Right lobe of liver (tissue), 6 donors: ENCODE measurements at regions of chr17 and their contacts with region 1.

Region 1: GRCh38 chr17:81142301-81143199 is 22.8 kb upstream of the PVALEF start:
- DNase-seq: peak; percentile 80 to 83 (median 81)
- ATAC-seq: peak; percentile 90 to 97 (median 96)
- H3K4me3 ChIP-seq: no peak overlapping the region
- H3K27ac ChIP-seq: no peak overlapping the region
- H3K4me1 ChIP-seq: peaks cover 0 to 7% (median 0%) of the 10 kb centered on the region in 4 donors
- H3K27me3 ChIP-seq: no peaks in the 10 kb centered on the region
- CTCF ChIP-seq: peak; percentile 64 to 70 (median 66)
- POLR2A ChIP-seq: no peak

Region 2: GRCh38 chr17:80913928-80914821 is 228.4 kb before region 1 on chr17:
- intact Hi-C with region 1: no loop called
- DNase-seq: peak in 2 of 3 donors; percentile 48 to 76
- ATAC-seq: peak in 3 of 4 donors; percentile 30 to 58 (median 47)
- H3K4me3 ChIP-seq: no peak overlapping the region
- H3K27ac ChIP-seq: no peak overlapping the region
- H3K4me1 ChIP-seq: no peaks in the 10 kb centered on the region
- H3K27me3 ChIP-seq: no peaks in the 10 kb centered on the region
- CTCF ChIP-seq: no peak
- POLR2A ChIP-seq: no peak

Region 3: DNA sequence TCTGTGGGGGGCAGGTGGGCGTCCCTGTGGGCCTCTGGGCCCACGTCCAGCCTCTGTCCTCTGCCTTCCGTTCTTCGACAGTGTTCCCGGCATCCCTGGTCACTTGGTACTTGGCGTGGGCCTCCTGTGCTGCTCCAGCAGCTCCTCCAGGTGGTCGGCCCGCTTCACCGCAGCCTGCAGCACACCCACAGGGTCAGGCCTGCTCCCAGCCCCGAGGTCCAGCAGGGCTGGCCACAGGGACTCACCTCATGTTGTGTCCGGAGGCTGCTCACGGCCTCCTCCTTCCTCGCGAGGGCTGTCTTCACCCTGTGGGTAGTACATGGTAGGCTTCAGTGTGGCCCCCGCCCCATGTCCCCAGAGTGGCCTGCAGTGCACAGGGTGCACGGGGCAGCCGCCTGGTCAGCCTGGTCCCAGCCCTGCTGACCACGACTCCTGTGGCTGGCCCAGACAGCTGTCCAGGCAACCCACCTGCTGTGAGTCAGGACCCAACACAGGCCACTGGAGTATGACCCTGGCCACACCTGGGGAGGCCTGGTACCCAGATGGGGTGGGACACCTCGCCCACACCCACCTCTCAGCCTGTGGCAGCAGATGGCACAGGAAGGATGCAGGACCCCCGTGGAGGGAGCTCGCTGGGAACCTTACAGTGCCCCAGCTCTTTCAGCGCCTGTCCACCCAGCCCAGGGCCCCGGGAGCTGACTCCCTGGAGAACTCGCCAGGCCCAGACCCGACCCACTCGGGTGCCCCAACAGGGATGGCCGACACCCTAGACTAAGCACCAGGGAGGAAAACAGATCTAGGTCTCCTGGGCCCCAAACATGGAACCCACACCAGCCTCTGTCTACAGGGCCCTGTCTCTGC is 47.4 kb after region 1 on chr17:
- intact Hi-C with region 1: loop called in 1 of 2 experiments (anchors 10 kb)
- DNase-seq: no peak
- ATAC-seq: peak; percentile 30 to 52 (median 42)
- H3K4me3 ChIP-seq: no peak overlapping the region
- H3K27ac ChIP-seq: no peak overlapping the region
- H3K4me1 ChIP-seq: no peaks in the 10 kb centered on the region
- H3K27me3 ChIP-seq: no peaks in the 10 kb centered on the region
- CTCF ChIP-seq: peak in 1 of 4 donors; percentile 22
- POLR2A ChIP-seq: no peak

Region 4: DNA sequence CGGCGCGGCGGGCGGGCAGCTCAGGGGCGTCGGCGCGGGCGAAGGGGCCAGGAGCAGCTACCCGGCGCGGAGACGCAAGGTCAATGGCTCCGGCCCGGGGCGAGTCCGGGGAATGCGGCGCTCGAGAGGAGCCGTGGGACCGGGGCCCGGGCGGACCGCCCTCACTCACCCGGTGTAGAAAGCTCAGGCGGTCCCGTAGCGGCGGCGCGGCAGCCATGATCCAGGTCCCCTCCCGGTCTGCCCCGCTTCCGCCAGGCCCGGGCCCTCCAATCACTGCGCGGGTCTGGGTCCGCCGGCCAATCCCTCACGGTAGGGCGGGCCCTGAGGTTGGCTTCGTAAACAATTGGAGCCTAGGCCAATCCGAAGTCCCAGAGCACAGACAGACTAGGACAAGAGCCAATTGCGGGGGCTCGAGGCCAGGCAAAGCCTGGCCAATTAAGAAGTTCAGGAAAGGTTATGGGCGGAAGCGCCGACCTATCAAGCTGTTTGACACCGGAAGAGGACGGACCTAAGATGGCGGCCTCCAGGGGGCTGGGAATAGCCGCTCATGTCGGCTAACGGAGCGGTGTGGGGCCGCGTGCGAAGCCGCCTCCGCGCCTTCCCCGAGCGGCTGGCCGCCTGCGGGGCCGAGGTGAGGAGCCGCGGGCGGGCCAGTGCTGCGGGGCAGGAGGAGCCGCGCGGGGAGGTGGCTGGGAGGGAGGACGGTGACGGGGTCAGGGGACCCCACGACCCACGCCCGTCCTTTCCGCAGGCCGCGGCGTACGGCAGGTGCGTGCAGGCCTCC is 96.5 kb after region 1 on chr17 and contains the starts of genes NDUFAF8 and TEPSIN:
- intact Hi-C with region 1: loop called in 1 of 2 experiments (anchors 10 kb)
- DNase-seq: peak; percentile 96 to 98 (median 98)
- ATAC-seq: peak; percentile 92 to 97 (median 96)
- H3K4me3 ChIP-seq: peak within 1 kb of the TSS; percentile 98 to 99 (median 99)
- H3K27ac ChIP-seq: peak within 1 kb of the TSS; percentile 32 to 73 (median 62)
- H3K4me1 ChIP-seq: peaks cover 0 to 12% (median 5%) of the 10 kb centered on the region in 4 donors
- H3K27me3 ChIP-seq: no peaks in the 10 kb centered on the region
- CTCF ChIP-seq: no peak
- POLR2A ChIP-seq: peak; percentile 22
- total RNA-seq, gene NDUFAF8: 15.7 to 35.9 (median 23.3) TPM
- total RNA-seq, gene TEPSIN: 11.9 to 27.6 (median 18.1) TPM